GM12878 (cell line): ENCODE measurements at regions of chr11 and their contacts with region 1.

Region 1: GRCh38 chr11:133078591-133079404 is 453.5 kb downstream of the OPCML start:
- DNase-seq: no peak
- ATAC-seq: peak; percentile 66
- H3K4me3 ChIP-seq: no peak overlapping the region
- H3K27ac ChIP-seq: no peak overlapping the region
- H3K4me1 ChIP-seq: no peaks in the 10 kb centered on the region
- H3K27me3 ChIP-seq: no peaks in the 10 kb centered on the region
- CTCF ChIP-seq: peak; percentile 78 to 80 (median 79)
- EP300 ChIP-seq: no peak
- POLR2A ChIP-seq: no peak
- RAD21 ChIP-seq: peak; percentile 74

Region 2: GRCh38 chr11:133029107-133029506 is 49.7 kb before region 1 on chr11:
- CTCF ChIA-PET with region 1: no interaction called
- POLR2A ChIA-PET with region 1: no interaction called
- RAD21 ChIA-PET with region 1: no interaction called
- SMC1A ChIA-PET with region 1: no interaction called
- in situ Hi-C with region 1: no loop called
- intact Hi-C with region 1: no loop called
- DNase-seq: no peak
- ATAC-seq: no peak
- H3K4me3 ChIP-seq: no peak overlapping the region
- H3K27ac ChIP-seq: no peak overlapping the region
- H3K4me1 ChIP-seq: no peaks in the 10 kb centered on the region
- H3K27me3 ChIP-seq: no peaks in the 10 kb centered on the region
- CTCF ChIP-seq: no peak
- EP300 ChIP-seq: no peak
- POLR2A ChIP-seq: no peak
- RAD21 ChIP-seq: no peak

Region 3: DNA sequence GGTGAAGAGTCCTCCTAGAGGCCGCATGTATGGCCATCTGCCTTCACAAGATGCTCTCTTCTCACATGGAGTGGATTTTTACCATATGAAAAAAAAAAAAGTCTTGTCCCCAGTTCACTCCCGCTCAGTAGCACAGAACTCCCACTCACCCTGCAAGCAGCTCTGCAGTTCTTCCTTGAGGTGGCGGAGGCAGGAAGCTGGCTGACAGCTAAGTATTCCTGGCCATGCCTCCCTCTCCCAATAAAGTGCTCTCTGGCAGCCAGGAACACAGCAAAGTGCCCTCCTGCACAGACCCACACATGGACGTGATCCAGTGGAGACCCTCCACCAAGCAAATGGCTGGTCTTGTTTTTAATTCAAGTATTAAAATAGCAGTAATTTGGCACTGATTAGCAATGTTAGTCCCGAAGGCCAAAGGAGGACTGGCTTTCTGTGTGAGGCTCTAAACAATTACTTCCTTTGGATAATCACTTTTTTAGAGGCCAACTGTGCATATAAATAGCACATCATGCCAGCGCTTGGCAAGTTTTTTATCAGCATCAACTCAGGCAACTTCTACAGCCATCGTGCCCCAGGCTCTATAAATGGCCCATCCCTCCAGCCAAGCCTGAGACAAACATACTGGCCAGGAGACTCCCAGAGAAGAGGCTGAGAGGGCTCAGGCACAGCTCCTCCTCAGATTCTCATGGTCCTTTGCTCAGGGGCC is 39.9 kb after region 1 on chr11:
- CTCF ChIA-PET with region 1: no interaction called
- POLR2A ChIA-PET with region 1: no interaction called
- RAD21 ChIA-PET with region 1: no interaction called
- SMC1A ChIA-PET with region 1: no interaction called
- in situ Hi-C with region 1: no loop called
- intact Hi-C with region 1: no loop called
- DNase-seq: no peak
- ATAC-seq: no peak
- H3K4me3 ChIP-seq: no peak overlapping the region
- H3K27ac ChIP-seq: no peak overlapping the region
- H3K4me1 ChIP-seq: no peaks in the 10 kb centered on the region
- H3K27me3 ChIP-seq: peaks cover 0 to 3% of the 10 kb centered on the region in 2 experiments; a peak in 2 of 4 replicates
- CTCF ChIP-seq: no peak
- EP300 ChIP-seq: no peak
- POLR2A ChIP-seq: no peak
- RAD21 ChIP-seq: no peak

Region 4: DNA sequence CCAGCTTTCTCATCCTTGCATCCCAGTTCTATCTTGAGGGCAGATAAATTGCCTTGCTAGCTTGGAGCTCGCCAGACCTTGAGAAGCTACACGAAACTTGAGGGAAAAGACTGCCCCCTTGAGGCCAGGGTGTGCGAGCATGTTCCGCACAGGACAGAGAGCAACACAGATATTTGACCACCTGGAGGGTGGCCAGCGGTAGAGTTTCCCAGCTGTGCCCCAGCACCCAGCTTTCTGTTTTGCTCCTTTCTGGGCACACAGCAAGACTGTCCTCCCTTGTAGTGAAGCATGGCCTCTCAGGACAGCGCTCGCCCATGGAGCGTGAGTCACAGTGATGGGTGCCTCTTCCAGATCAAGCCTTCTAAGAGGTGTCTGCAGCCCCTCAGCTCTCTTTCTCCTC is 743.0 kb after region 1 on chr11:
- CTCF ChIA-PET with region 1: interaction called, 4 read pairs
- POLR2A ChIA-PET with region 1: no interaction called
- RAD21 ChIA-PET with region 1: no interaction called
- SMC1A ChIA-PET with region 1: no interaction called
- in situ Hi-C with region 1: no loop called
- intact Hi-C with region 1: loop called (anchors 5 kb)
- DNase-seq: no peak
- ATAC-seq: peak; percentile 83
- H3K4me3 ChIP-seq: no peak overlapping the region
- H3K27ac ChIP-seq: no peak overlapping the region
- H3K4me1 ChIP-seq: no peaks in the 10 kb centered on the region
- H3K27me3 ChIP-seq: no peaks in the 10 kb centered on the region; a peak in 1 of 4 replicates
- CTCF ChIP-seq: peak; percentile 61 to 72 (median 71)
- EP300 ChIP-seq: no peak
- POLR2A ChIP-seq: no peak
- RAD21 ChIP-seq: peak; percentile 61

Region 5: DNA sequence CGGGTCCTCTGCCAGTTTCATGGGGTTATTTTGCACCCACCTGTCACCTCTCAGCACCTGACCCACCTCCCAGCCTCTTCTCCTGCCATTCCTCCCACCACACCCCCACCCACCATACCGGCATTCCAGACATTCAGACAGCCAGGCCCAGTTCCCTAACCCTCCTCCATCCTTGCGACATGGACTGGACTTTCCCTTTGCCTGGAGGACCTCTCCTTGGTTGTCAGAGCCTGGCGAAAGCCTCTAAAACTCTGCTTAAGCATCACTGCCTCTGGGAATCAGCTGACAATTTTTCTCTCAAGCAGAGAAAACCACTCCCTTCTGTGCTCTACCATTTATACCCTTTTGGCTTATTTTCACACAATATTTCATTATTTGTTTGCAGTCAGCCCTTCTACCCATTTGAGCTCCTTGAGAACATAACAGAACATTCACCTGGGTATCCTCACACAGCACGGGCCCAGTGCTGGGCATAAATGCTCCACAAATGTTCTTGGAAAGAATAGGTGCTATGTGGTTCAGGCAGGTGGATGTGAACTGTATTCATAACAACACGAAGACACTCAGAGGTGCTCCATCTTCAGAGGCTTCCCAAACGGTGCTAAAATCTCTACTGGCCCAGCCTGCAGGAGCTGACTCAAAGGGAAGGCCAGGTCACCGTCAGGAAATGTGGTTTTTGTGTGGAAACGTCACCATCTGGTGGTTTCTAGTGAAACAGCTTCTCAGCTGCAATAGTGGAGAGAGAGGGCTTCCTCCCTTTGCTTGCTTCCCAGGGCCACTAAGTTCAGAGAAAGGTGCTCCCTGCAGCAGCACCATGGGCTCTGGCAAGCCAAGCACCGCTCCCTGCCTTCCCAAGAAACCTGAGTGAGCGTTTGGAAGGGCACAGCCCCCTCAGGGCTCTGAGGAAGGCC is 756.1 kb after region 1 on chr11:
- CTCF ChIA-PET with region 1: interaction called, 8 read pairs
- POLR2A ChIA-PET with region 1: no interaction called
- RAD21 ChIA-PET with region 1: interaction called, 4 read pairs
- SMC1A ChIA-PET with region 1: interaction called, 7 read pairs
- in situ Hi-C with region 1: no loop called
- intact Hi-C with region 1: loop called (anchors 1 kb)
- DNase-seq: peak; percentile 23
- ATAC-seq: peak; percentile 96
- H3K4me3 ChIP-seq: no peak overlapping the region
- H3K27ac ChIP-seq: no peak overlapping the region
- H3K4me1 ChIP-seq: no peaks in the 10 kb centered on the region
- H3K27me3 ChIP-seq: no peaks in the 10 kb centered on the region; a peak in 1 of 4 replicates
- CTCF ChIP-seq: peak; percentile 59 to 75 (median 61); a peak in 5 of 6 replicates
- EP300 ChIP-seq: no peak
- POLR2A ChIP-seq: no peak
- RAD21 ChIP-seq: peak; percentile 86